ENCODE measurements at regions of chr2 and their contacts with region 1.

Region 1: GRCh38 chr2:44291281-44292248 is 16.3 kb downstream of the SLC3A1 start:
- DNase-seq: peak; percentile 18 to 52
- ATAC-seq: peak; percentile 89 to 97 (median 92)
- H3K4me3 ChIP-seq: peak overlapping the region; percentile 46
- H3K27ac ChIP-seq: no peak overlapping the region
- H3K4me1 ChIP-seq: peaks cover 9% of the 10 kb centered on the region
- H3K27me3 ChIP-seq: no peaks in the 10 kb centered on the region
- CTCF ChIP-seq: peak; percentile 65

Region 2: GRCh38 chr2:44044281-44044720 is 247.3 kb before region 1 on chr2:
- intact Hi-C with region 1: loop called (anchors 2 to 5 kb)
- DNase-seq: peak; percentile 84 to 94
- ATAC-seq: peak; percentile 99 to 100 (median 100)
- H3K4me3 ChIP-seq: no peak overlapping the region
- H3K27ac ChIP-seq: peak overlapping the region; percentile 61
- H3K4me1 ChIP-seq: peaks cover 6% of the 10 kb centered on the region
- H3K27me3 ChIP-seq: no peaks in the 10 kb centered on the region
- CTCF ChIP-seq: peak; percentile 90

Region 3: GRCh38 chr2:44244129-44244871 is 47.3 kb before region 1 on chr2:
- intact Hi-C with region 1: loop called (anchors 5 kb)
- DNase-seq: peak; percentile 35 to 63
- ATAC-seq: peak; percentile 71 to 89 (median 86)
- H3K4me3 ChIP-seq: peak overlapping the region; percentile 61
- H3K27ac ChIP-seq: peak overlapping the region; percentile 50
- H3K4me1 ChIP-seq: peaks cover 12% of the 10 kb centered on the region
- H3K27me3 ChIP-seq: no peaks in the 10 kb centered on the region
- CTCF ChIP-seq: peak; percentile 68